ENCODE measurements at regions of chr17 and their contacts with region 1.

Region 1: DNA sequence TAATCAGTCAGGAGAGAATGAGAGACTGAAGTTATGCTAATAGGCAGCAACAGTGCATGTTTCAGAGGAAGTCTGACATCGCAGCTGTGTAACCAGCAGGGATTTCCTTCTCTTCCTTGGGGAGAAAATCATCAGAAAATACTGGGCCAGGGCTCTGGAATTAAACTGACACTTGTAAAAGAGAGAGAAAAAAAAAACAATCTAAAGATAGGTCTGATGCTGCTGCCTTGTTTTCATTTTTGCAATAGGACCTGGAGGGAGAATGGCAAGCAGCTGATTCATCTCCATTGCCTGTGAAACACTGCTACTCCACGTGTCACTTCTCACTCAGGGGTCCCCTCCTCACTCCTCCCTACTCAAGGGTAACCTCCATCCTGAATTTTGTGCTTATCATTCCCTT is 17.7 kb upstream of the CORO6 start:
- DNase-seq: no peak
- H3K4me3 Mint-ChIP-seq: no peak overlapping the region
- H3K27ac Mint-ChIP-seq: peak overlapping the region; percentile 82
- H3K4me1 Mint-ChIP-seq: peaks cover 38% of the 10 kb centered on the region
- H3K27me3 Mint-ChIP-seq: no peaks in the 10 kb centered on the region

Region 2: GRCh38 chr17:29653995-29654714 is 13.7 kb after region 1 on chr17:
- CTCF ChIA-PET with region 1: interaction called, 11 read pairs
- intact Hi-C with region 1: no loop called
- DNase-seq: no peak
- H3K4me3 Mint-ChIP-seq: no peak overlapping the region
- H3K27ac Mint-ChIP-seq: no peak overlapping the region
- H3K4me1 Mint-ChIP-seq: peaks cover 4% of the 10 kb centered on the region
- H3K27me3 Mint-ChIP-seq: no peaks in the 10 kb centered on the region

Region 3: DNA sequence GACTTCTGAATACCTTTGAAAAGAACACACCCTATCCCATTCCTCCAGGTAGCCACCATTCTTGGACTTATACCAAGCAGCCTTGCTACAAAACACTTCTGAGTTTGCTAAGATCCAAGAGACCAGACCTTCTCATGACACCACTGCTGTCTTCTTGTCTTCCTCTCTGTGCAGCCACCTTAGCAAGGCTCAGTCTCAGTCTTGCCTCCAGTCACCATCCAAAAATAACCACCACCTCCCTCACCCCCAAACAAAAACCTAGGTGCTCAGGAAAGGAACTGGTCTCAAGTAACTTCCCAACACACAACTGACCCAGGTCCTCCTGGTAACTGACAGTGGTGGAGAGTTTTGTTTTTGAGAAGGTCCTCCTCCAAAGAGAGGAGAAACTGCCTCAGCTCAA is 73.2 kb after region 1 on chr17:
- CTCF ChIA-PET with region 1: no interaction called
- intact Hi-C with region 1: no loop called
- DNase-seq: no peak
- H3K4me3 Mint-ChIP-seq: no peak overlapping the region
- H3K27ac Mint-ChIP-seq: no peak overlapping the region
- H3K4me1 Mint-ChIP-seq: peaks cover 71% of the 10 kb centered on the region
- H3K27me3 Mint-ChIP-seq: no peaks in the 10 kb centered on the region

Region 4: DNA sequence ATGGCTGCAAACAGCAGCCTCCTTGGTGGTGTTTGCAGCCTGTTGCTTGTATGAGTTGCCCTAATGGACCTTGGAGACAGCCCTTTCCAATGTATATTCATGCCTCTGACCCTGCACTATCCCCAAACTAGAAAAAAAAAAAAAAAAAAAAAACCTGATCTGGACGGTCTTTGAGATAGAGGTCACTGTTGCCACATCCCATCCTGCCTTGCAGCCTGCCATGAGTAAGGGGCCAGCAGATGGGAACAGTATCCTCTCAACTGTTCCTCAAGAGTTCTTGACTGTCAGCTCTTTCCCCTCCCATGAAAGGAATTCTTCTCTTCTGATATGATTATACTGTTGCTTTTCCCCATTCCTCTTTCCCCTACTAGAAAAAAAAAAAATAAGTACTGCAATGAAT is 137.2 kb after region 1 on chr17:
- CTCF ChIA-PET with region 1: interaction called, 154 read pairs
- intact Hi-C with region 1: loop called (anchors 1 kb)
- DNase-seq: no peak
- H3K4me3 Mint-ChIP-seq: no peak overlapping the region
- H3K27ac Mint-ChIP-seq: no peak overlapping the region
- H3K4me1 Mint-ChIP-seq: peaks cover 5% of the 10 kb centered on the region
- H3K27me3 Mint-ChIP-seq: no peaks in the 10 kb centered on the region

Region 5: DNA sequence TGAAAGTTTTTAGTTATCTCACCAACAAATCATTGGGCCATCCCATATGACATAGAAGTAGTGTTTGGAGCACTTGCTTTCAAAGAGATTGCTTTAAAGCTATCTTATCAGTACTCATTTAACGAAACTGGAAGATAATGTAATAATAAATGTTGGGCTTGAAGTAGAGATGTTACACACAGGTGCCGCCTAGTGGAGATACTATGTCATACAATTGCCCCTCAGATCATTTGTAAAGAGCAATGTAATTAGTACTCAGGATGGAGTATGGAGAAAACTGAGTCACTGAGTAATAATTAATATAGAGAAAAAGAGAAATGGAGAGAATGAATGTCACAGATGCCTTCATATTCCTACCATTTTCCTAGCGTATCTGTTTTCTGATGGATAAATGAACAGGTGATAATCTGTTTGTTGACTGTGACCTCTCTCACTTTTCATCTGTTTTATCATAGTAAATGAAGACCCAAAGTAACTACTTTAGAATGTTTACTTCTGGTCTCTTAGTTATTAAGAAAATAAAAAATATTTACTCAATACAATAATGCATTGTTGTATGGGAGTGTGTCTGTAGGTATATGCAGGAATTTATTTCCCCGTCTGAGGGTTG is 381.4 kb after region 1 on chr17:
- CTCF ChIA-PET with region 1: no interaction called
- intact Hi-C with region 1: loop called (anchors 1 kb)
- DNase-seq: peak; percentile 63
- H3K4me3 Mint-ChIP-seq: no peak overlapping the region
- H3K27ac Mint-ChIP-seq: no peak overlapping the region
- H3K4me1 Mint-ChIP-seq: no peaks in the 10 kb centered on the region
- H3K27me3 Mint-ChIP-seq: no peaks in the 10 kb centered on the region

Measured in activated naive CD4-positive, alpha-beta T cell treated with anti-CD3 and anti-CD28 coated beads for 36 hours (primary cell).